Vagina (tissue), 2 donors: ENCODE measurements at regions of chr9 and their contacts with region 1.

Region 1: DNA sequence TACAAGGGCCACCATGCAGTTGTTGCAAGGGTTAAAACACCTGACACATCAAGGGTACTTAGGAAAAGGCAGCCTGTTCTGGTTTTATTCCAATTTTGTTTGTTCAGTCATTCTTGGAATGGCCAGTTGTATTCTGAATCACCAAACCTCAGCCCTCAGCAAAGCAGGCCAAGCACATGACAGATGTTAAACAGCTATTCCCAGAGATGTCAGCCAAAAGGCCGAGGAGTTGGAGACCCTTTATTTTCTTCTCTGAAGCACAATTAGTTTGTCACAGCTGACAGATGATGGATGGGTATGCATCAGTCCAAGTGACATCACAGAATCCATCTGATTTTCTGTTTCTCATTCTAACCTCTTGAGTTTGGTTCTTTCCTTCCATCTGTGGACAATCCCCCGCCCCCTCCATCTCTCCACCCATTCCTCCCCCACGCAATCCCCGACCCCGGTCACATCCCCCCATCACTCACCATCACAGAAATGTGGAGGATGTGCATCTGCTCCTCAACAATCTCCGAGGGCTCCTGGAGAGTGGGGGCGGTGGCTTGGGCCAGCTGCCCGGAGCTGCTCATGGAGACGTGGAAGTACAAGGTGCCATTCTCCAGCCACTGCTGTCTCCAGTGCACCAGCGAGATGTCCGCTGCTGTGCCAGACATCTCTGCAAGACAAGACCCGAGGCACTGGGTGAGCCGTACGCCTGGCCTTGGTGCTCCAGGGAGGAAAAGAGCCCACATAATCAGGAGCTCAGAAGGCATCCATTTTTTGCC is 123.8 kb downstream of the ASTN2 start:
- DNase-seq: no peak
- H3K4me3 ChIP-seq: no peak overlapping the region
- H3K27ac ChIP-seq: no peak overlapping the region
- H3K4me1 ChIP-seq: no peaks in the 10 kb centered on the region
- H3K27me3 ChIP-seq: no peaks in the 10 kb centered on the region
- CTCF ChIP-seq: no peak
- POLR2A ChIP-seq: no peak

Region 2: GRCh38 chr9:117153021-117153420 is 138.0 kb before region 1 on chr9:
- intact Hi-C with region 1: loop called (anchors 10 kb)
- DNase-seq: no peak
- H3K4me3 ChIP-seq: no peak overlapping the region
- H3K27ac ChIP-seq: no peak overlapping the region
- H3K4me1 ChIP-seq: no peaks in the 10 kb centered on the region
- H3K27me3 ChIP-seq: no peaks in the 10 kb centered on the region
- CTCF ChIP-seq: no peak
- POLR2A ChIP-seq: no peak